GM12878 (cell line): ENCODE measurements at regions of chr20 and their contacts with region 1.

Region 1: DNA sequence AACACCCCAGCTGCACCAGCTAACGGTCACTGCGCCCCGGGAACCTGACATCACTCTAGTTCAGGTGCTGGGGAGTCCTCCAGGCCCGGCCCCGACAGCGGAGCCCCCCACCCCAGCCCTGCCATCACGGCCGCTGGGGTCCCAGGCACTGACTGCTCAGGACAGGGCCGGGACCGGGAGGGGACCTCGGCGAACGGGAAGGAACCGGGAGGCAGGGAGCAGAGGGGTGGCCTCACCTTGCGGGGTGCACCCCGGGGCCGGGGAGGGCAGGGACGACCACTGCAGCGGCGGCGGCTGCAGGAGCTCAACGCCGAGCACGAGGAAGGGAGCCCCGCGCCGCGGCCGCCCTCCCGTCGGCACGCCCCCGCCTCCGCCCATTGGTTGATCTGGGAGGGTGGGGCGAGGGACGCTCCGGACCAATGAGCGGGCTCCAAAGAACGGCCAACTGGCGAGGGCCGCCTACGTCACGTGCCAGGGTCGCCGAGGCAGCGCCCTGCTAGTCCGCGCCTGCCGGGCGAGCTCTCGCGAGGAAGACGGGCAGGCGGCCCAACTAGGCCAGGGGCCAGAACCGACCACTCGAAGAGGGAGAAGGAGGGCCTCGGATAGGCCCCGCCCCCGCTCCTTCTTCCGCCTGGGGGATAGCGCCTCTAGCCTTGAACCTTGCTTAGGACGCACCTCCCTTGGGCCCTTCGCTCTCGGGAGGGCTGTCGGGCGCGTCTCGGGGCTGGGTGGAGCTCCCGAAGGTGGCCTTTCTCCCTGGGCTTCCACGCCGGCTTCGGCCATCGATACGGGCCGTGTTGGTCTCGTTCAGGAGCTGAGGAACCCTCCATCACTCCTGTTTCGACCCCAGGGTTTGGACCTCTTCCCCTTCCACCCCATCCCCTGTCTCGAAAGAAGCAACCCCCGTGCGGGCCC is at the start of gene ADISSP:
- DNase-seq: peak; percentile 91
- ATAC-seq: peak; percentile 97
- H3K4me3 ChIP-seq: peak within 1 kb of the TSS; percentile 89
- H3K27ac ChIP-seq: peak within 1 kb of the TSS; percentile 75
- H3K4me1 ChIP-seq: peaks cover 24% of the 10 kb centered on the region
- H3K27me3 ChIP-seq: no peaks in the 10 kb centered on the region
- CTCF ChIP-seq: peak in 2 of 3 experiments; percentile 14 to 23; a peak in 2 of 6 replicates
- EP300 ChIP-seq: no peak
- POLR2A ChIP-seq: peak; percentile 84
- RAD21 ChIP-seq: no peak
- polyA plus RNA-seq, gene ADISSP: 0.80 to 7.6 TPM

Region 2: GRCh38 chr20:3616250-3616649 is 151.4 kb before region 1 on chr20:
- CTCF ChIA-PET with region 1: no interaction called
- POLR2A ChIA-PET with region 1: no interaction called
- RAD21 ChIA-PET with region 1: no interaction called
- SMC1A ChIA-PET with region 1: no interaction called
- in situ Hi-C with region 1: no loop called
- intact Hi-C with region 1: no loop called
- DNase-seq: no peak
- ATAC-seq: no peak
- H3K4me3 ChIP-seq: no peak overlapping the region
- H3K27ac ChIP-seq: no peak overlapping the region
- H3K4me1 ChIP-seq: 0 out of 2 replicates have a peak, but pooled peaks cover 3% of the 10 kb centered on the region
- H3K27me3 ChIP-seq: no peaks in the 10 kb centered on the region
- CTCF ChIP-seq: no peak
- EP300 ChIP-seq: no peak
- POLR2A ChIP-seq: no peak
- RAD21 ChIP-seq: no peak

Region 3: GRCh38 chr20:3710703-3711483 is 56.8 kb before region 1 on chr20:
- CTCF ChIA-PET with region 1: interaction called, 19 read pairs
- POLR2A ChIA-PET with region 1: no interaction called
- RAD21 ChIA-PET with region 1: interaction called, 3 read pairs
- SMC1A ChIA-PET with region 1: interaction called, 6 read pairs
- in situ Hi-C with region 1: no loop called
- intact Hi-C with region 1: loop called (anchors 5 kb)
- DNase-seq: no peak
- ATAC-seq: peak; percentile 89
- H3K4me3 ChIP-seq: no peak overlapping the region
- H3K27ac ChIP-seq: no peak overlapping the region
- H3K4me1 ChIP-seq: peaks cover 5% of the 10 kb centered on the region
- H3K27me3 ChIP-seq: no peaks in the 10 kb centered on the region
- CTCF ChIP-seq: peak; percentile 84 to 93 (median 85)
- EP300 ChIP-seq: no peak
- POLR2A ChIP-seq: no peak
- RAD21 ChIP-seq: peak; percentile 80

Region 4: DNA sequence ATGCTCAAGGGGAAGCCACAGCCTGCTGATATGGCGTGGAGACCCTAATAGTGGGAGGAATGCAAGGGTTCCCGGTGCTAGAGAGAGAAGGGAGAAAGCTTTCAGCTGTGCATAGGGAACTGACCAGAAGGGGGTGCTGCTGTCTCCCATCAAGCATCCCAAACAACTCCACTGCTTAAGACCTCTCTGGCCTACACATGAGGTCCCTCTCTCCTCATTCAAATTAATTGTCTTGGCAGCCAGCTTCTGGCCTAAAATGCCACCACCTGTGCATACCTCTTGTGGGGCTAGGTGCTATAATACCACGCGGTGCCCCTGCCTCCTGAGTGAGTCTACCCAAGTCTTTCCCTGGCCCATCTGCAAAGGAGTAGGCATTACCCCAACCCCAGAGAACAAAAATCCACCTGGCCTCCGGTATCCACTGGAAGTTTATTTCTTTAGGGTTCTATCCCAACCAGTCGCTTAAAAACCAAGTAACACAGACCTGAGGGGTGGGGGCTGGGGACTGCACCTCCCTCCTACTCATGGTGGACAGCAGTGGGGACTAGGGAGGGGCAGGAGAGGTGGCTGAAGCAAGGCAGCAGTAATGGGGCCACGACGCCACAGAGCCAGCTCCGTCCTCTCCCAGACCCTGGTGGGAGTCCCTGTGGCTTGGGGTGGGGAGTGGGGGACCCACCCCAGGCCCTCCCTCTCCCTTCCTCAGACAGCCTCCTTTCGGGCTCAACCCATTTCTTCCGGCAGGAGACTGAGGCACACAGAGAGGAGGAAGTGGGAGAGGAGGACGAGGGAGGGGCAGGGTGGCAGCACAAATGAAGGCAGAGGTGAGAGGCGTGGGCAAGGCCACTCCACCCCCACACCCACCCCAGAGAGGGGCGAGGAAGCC is 14.3 kb before region 1 on chr20:
- CTCF ChIA-PET with region 1: interaction called, 52 read pairs
- POLR2A ChIA-PET with region 1: interaction called, 5 read pairs
- RAD21 ChIA-PET with region 1: interaction called, 7 read pairs
- SMC1A ChIA-PET with region 1: interaction called, 12 read pairs
- in situ Hi-C with region 1: no loop called
- intact Hi-C with region 1: loop called (anchors 2 kb)
- DNase-seq: no peak
- ATAC-seq: peak; percentile 83
- H3K4me3 ChIP-seq: no peak overlapping the region
- H3K27ac ChIP-seq: no peak overlapping the region
- H3K4me1 ChIP-seq: no peaks in the 10 kb centered on the region
- H3K27me3 ChIP-seq: no peaks in the 10 kb centered on the region
- CTCF ChIP-seq: peak; percentile 68 to 79 (median 78)
- EP300 ChIP-seq: no peak
- POLR2A ChIP-seq: no peak
- RAD21 ChIP-seq: peak; percentile 64

Region 5: DNA sequence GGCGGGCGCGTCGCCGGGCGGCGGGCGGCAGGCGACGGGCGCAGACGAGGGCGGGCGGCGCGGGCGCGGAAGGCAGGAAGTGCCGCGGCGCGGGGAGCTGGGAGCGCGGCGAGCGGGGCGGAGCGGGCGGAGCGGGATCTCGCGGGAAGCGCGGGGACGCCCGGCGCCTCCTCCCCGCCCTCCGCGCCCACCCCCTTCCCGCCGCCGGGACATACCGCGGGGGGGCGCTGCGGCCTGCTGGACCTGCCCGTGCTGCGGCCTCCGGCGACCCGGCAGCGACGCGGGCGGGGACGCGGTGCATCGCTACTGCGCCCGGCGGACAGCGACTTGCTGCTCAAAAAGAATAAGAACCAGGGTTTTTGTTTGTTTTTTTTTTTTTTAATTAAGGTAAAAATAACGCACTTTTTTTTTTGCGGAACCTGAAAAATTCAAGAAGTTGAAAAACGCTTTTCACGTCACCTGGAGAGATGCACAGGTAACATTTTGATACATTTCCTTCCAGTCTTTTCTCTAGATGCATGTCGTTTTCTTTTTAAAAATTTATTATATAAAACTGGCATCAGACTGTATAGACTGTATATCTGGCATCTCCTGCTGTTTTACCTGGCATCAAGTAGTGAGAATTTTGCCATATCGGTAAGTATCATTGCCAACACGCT is 19.1 kb after region 1 on chr20 and contains the start of gene CENPB:
- CTCF ChIA-PET with region 1: interaction called, 21 read pairs
- POLR2A ChIA-PET with region 1: interaction called, 3 read pairs
- RAD21 ChIA-PET with region 1: interaction called, 10 read pairs
- SMC1A ChIA-PET with region 1: interaction called, 3 read pairs
- in situ Hi-C with region 1: no loop called
- intact Hi-C with region 1: no loop called
- DNase-seq: no peak
- ATAC-seq: peak; percentile 97
- H3K4me3 ChIP-seq: peak within 1 kb of the TSS; percentile 82
- H3K27ac ChIP-seq: peak within 1 kb of the TSS; percentile 50
- H3K4me1 ChIP-seq: peaks cover 17% of the 10 kb centered on the region
- H3K27me3 ChIP-seq: no peaks in the 10 kb centered on the region
- CTCF ChIP-seq: peak; percentile 70 to 86 (median 71)
- EP300 ChIP-seq: no peak
- POLR2A ChIP-seq: 0 out of 2 replicates have a peak, but pooled peaks have one; percentile 54
- RAD21 ChIP-seq: peak; percentile 84
- polyA plus RNA-seq, gene CENPB: 0.16 to 0.29 TPM